ENCODE measurements at regions of chr2 and their contacts with region 1.

Region 1: DNA sequence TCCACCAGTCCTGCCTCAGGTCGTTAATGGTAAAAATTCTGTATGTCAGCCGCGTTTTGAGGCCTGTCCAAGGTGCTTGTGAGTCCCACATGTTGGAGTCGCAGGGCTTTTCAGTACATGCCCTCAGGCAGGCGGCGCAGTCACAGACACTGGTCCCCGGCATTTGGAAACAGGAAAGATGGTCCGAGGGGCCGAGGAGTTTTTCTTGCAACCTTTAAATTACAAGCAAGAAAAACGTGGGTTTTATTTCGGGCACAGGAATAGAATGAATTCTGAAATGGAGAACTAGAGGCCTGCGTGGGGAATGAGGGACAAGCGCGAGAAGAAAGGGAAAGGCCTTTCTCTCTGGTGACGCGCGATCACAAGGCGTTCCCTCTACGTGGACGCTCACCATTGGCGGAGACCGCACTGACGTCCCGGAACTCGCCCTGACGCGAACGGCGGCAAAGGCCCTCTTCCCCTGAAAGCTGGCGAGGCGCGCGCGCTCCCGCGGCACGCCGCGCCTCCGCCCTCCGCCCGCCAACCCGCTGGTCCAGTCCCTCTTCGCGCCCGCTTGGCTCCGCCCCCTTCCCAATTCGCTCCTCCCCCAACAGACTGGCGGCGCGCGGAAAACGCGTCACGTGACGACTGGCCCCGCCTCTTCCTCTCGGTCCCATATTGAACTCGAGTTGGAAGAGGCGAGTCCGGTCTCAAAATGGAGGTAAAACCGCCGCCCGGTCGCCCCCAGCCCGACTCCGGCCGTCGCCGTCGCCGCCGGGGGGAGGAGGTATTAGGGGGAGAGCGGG is at the start of gene HNRNPA3:
- DNase-seq: peak; percentile 97
- ATAC-seq: peak; percentile 92
- H3K4me3 ChIP-seq: peak within 1 kb of the TSS; percentile 81 to 92
- H3K27ac ChIP-seq: peak within 1 kb of the TSS; percentile 93
- H3K4me1 ChIP-seq: peaks cover 11 to 19% of the 10 kb centered on the region in 2 experiments
- H3K27me3 ChIP-seq: no peaks in the 10 kb centered on the region
- CTCF ChIP-seq: 0 out of 6 replicates have a peak, but pooled peaks of 1 of the 3 experiments have one; percentile 10
- POLR2A ChIP-seq: peak; percentile 72
- RAD21 ChIP-seq: no peak
- total RNA-seq, gene HNRNPA3: 328 TPM

Region 2: GRCh38 chr2:177148477-177149154 is 63.7 kb before region 1 on chr2:
- CTCF ChIA-PET with region 1: no interaction called
- POLR2A ChIA-PET with region 1: no interaction called
- RAD21 ChIA-PET with region 1: no interaction called
- intact Hi-C with region 1: no loop called
- DNase-seq: peak; percentile 68
- ATAC-seq: peak; percentile 99
- H3K4me3 ChIP-seq: peak overlapping the region; percentile 25 to 51
- H3K27ac ChIP-seq: no peak overlapping the region
- H3K4me1 ChIP-seq: peaks cover 0 to 8% of the 10 kb centered on the region in 2 experiments; a peak in 2 of 4 replicates
- H3K27me3 ChIP-seq: no peaks in the 10 kb centered on the region
- CTCF ChIP-seq: peak; percentile 82 to 94 (median 90); a peak in 5 of 6 replicates
- POLR2A ChIP-seq: no peak
- RAD21 ChIP-seq: peak; percentile 79

Region 3: GRCh38 chr2:177195194-177195593 is 17.1 kb before region 1 on chr2:
- CTCF ChIA-PET with region 1: interaction called, 8 read pairs
- POLR2A ChIA-PET with region 1: interaction called, 13 read pairs
- RAD21 ChIA-PET with region 1: no interaction called
- intact Hi-C with region 1: no loop called
- DNase-seq: no peak
- ATAC-seq: peak; percentile 73
- H3K4me3 ChIP-seq: no peak overlapping the region
- H3K27ac ChIP-seq: no peak overlapping the region
- H3K4me1 ChIP-seq: no peaks in the 10 kb centered on the region
- H3K27me3 ChIP-seq: no peaks in the 10 kb centered on the region
- CTCF ChIP-seq: 0 out of 6 replicates have a peak, but pooled peaks of 2 of the 3 experiments have one; percentile 16 to 31
- POLR2A ChIP-seq: no peak
- RAD21 ChIP-seq: peak; percentile 46; the same call in 1 of the 2 replicates

Region 4: GRCh38 chr2:177201919-177202346 is 10.4 kb before region 1 on chr2:
- CTCF ChIA-PET with region 1: interaction called, 8 read pairs
- POLR2A ChIA-PET with region 1: interaction called, 15 read pairs
- RAD21 ChIA-PET with region 1: no interaction called
- intact Hi-C with region 1: no loop called
- DNase-seq: no peak
- ATAC-seq: no peak
- H3K4me3 ChIP-seq: no peak overlapping the region
- H3K27ac ChIP-seq: no peak overlapping the region
- H3K4me1 ChIP-seq: no peaks in the 10 kb centered on the region
- H3K27me3 ChIP-seq: no peaks in the 10 kb centered on the region
- CTCF ChIP-seq: no peak
- POLR2A ChIP-seq: no peak
- RAD21 ChIP-seq: no peak

Region 5: DNA sequence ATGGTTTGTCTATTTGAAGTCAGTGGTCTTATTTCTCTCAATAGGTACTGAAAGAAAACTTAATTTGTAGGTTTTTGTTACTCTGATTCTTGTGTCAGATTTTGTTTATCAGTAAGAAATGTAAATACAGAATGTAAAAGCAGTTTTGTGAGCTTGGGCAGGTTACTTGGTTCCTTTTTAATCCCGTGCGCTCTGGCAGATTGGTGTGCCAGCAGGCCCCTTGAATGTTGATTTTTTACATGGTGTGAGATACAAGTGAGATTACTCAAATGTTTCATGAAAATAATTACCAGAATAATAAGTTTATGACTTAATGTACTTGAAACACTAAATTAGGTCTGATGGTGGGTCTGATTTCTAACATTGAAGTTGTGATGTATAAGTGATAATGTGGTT is 13.7 kb after region 1 on chr2:
- CTCF ChIA-PET with region 1: no interaction called
- POLR2A ChIA-PET with region 1: interaction called, 3 read pairs
- RAD21 ChIA-PET with region 1: no interaction called
- intact Hi-C with region 1: loop called (anchors 1 kb)
- DNase-seq: no peak
- ATAC-seq: no peak
- H3K4me3 ChIP-seq: no peak overlapping the region
- H3K27ac ChIP-seq: no peak overlapping the region
- H3K4me1 ChIP-seq: no peaks in the 10 kb centered on the region
- H3K27me3 ChIP-seq: no peaks in the 10 kb centered on the region
- CTCF ChIP-seq: no peak
- POLR2A ChIP-seq: no peak
- RAD21 ChIP-seq: no peak

Region 6: GRCh38 chr2:177242116-177242987 is 30.1 kb after region 1 on chr2:
- CTCF ChIA-PET with region 1: no interaction called
- POLR2A ChIA-PET with region 1: interaction called, 3 read pairs
- RAD21 ChIA-PET with region 1: no interaction called
- intact Hi-C with region 1: loop called (anchors 1 kb)
- DNase-seq: peak; percentile 83
- ATAC-seq: peak; percentile 71
- H3K4me3 ChIP-seq: peak overlapping the region; percentile 27 to 48
- H3K27ac ChIP-seq: peak overlapping the region; percentile 81
- H3K4me1 ChIP-seq: peaks cover 66 to 77% of the 10 kb centered on the region in 2 experiments
- H3K27me3 ChIP-seq: no peaks in the 10 kb centered on the region
- CTCF ChIP-seq: no peak
- POLR2A ChIP-seq: no peak
- RAD21 ChIP-seq: no peak

Measured in HCT116 (cell line).